Activated CD4-positive, alpha-beta T cell treated with anti-CD3 and anti-CD28 coated beads, Interleukin-2, amount 10 ng/mL, durations not matched to agents 24 days and 14 days (primary cell): ENCODE measurements at regions of chr6 and their contacts with region 1.

Region 1: DNA sequence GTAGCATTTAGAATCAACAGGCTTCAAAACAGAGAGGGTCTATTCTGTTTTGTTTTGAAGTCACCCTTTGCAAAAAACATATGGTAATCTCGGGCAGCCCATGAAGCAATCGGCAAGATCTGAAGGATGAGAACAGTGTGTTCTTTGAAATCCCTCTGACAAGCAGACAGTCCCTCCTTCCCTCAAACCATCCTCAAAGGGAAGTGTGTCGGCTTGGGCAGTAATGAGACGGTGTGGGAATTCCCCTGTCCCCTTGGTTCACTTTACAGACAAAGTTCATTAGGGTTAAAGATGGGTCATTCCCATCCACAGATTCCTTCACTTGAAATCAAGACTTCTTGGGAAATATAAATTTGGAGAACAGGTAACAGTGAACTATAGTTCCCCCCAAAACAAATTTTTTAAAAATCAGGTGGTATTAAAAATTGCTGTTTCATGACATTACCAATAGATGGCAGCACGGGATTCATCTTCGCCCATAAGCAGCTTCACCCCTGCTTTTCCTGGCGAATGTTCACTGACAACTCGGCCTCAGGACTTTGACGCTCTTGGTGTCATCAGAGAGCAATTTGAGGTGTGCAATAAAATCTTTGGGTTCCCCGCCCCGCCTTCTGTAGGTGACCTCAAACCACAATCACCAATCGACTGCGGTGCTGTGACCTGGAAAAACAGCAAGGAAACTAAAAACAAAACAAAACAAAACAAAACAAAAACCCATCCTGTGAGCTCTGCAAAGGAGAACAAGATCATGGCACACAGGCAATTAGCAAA is 159.3 kb upstream of the TNFAIP3 start:
- DNase-seq: peak; percentile 96
- H3K4me3 Mint-ChIP-seq: peak overlapping the region; percentile 80
- H3K27ac Mint-ChIP-seq: peak overlapping the region; percentile 98
- H3K4me1 Mint-ChIP-seq: peaks cover 74% of the 10 kb centered on the region
- H3K27me3 Mint-ChIP-seq: peaks cover 1% of the 10 kb centered on the region

Region 2: GRCh38 chr6:137680705-137681346 is 26.9 kb before region 1 on chr6:
- intact Hi-C with region 1: loop called (anchors 1 kb)
- DNase-seq: no peak
- H3K4me3 Mint-ChIP-seq: peak overlapping the region; percentile 22
- H3K27ac Mint-ChIP-seq: peak overlapping the region; percentile 61
- H3K4me1 Mint-ChIP-seq: peaks cover 61% of the 10 kb centered on the region
- H3K27me3 Mint-ChIP-seq: no peaks in the 10 kb centered on the region

Region 3: GRCh38 chr6:137823826-137824555 is 116.2 kb after region 1 on chr6:
- intact Hi-C with region 1: loop called (anchors 1 kb)
- DNase-seq: peak; percentile 94
- H3K4me3 Mint-ChIP-seq: peak overlapping the region; percentile 76
- H3K27ac Mint-ChIP-seq: peak overlapping the region; percentile 98
- H3K4me1 Mint-ChIP-seq: peaks cover 71% of the 10 kb centered on the region
- H3K27me3 Mint-ChIP-seq: no peaks in the 10 kb centered on the region

Region 4: DNA sequence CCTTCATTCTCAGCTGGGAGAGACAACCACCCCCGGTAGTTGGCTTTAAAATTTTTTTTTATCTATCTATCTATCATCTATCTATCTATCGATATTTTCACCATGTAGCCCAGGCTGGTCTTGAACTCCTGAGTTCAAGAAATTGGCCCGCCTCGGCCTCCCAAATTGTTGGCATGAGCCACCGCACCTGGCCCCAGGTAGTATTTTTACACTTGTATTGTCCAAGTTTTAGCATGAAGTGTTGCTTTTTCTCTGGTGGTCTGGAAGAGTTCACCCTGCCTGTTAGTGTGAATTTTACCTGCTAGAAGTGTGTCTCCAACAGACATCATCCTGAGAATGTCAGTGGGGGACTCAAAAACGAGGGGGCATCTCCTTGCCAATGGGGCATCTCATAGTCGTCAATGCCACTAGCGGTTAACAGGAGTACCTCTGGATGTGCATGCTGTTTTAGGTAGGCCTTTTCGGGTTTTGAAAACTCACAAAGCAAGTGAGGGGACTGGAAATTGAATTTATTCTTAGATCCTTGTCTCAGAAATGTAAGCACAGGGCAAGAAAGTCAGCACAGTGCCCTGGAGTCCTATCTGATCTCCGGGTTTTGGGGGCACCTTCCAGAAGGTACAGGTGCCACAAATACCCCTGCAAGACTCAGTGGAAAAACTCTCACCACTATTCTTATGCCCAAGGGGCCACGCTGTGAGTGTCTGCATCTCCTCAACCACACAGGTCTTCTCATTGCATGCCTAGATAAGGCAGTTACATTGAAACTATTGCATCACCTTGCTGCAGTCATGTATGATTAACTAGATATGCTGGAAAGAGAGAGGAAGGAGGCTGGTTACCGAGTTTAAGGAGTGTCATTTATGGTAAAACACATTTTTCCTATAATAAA is 196.4 kb after region 1 on chr6:
- intact Hi-C with region 1: loop called (anchors 1 kb)
- DNase-seq: peak; percentile 81
- H3K4me3 Mint-ChIP-seq: peak overlapping the region; percentile 75
- H3K27ac Mint-ChIP-seq: peak overlapping the region; percentile 99
- H3K4me1 Mint-ChIP-seq: peaks cover 50% of the 10 kb centered on the region
- H3K27me3 Mint-ChIP-seq: no peaks in the 10 kb centered on the region

Region 5: GRCh38 chr6:137975188-137975940 is 267.6 kb after region 1 on chr6:
- intact Hi-C with region 1: loop called (anchors 1 kb)
- DNase-seq: peak; percentile 82
- H3K4me3 Mint-ChIP-seq: peak overlapping the region; percentile 77
- H3K27ac Mint-ChIP-seq: peak overlapping the region; percentile 92
- H3K4me1 Mint-ChIP-seq: peaks cover 55% of the 10 kb centered on the region
- H3K27me3 Mint-ChIP-seq: no peaks in the 10 kb centered on the region